Mammary epithelial cell (primary cell): ENCODE measurements at regions of chr15 and their contacts with region 1.

Region 1: DNA sequence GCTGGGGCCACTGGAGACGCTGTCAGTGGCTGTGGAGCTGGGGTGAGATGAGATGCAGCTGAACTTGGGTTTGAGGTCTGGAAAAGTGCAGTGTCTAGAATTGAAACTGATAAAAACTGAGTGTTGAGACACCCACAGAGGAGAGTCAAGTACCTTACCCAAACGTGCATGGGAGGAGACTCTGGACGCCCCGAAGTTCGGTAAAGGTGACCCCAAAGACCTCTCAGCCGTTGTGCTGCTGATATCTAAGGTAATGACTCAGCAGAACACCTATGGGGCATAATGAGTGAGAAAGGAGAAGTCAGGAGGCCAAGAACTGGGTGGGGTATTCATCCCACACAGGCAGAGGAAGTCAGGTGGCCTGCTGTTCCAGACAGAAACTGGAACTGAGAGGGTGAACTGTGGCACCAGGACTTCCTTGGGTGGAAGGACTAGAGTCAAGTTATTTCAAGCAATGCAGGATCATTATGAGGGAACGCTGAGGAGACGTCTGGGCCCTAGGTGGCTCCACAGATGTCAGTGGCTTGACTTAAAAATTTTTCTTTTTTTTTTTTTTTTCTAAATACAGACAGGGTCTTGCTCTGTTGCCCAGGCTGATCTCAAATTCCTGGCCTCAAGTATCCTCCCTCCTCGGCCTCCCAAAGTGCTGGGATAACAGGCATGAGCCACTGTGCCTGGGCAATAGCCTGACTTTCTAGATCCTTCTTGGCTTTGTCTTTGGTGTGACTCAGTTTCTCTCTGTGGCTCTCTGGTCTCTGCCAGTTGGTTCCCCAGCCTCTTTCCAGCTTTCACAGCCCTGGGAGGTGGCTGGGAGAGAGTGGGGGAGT is 67.6 kb upstream of the GCNT3 start:
- DNase-seq: no peak
- H3K4me3 ChIP-seq: no peak overlapping the region
- H3K27ac ChIP-seq: no peak overlapping the region
- H3K4me1 ChIP-seq: peaks cover 3% of the 10 kb centered on the region
- H3K27me3 ChIP-seq: no peaks in the 10 kb centered on the region
- CTCF ChIP-seq: no peak

Region 2: GRCh38 chr15:59553879-59554735 is 10.2 kb after region 1 on chr15:
- CTCF ChIA-PET with region 1: interaction called, 3 read pairs
- dilution Hi-C with region 1: no loop called
- in situ Hi-C with region 1: no loop called
- intact Hi-C with region 1: loop called (anchors 2 kb)
- DNase-seq: peak; percentile 97
- H3K4me3 ChIP-seq: no peak overlapping the region
- H3K27ac ChIP-seq: peak overlapping the region; percentile 89
- H3K4me1 ChIP-seq: peaks cover 30% of the 10 kb centered on the region
- H3K27me3 ChIP-seq: no peaks in the 10 kb centered on the region
- CTCF ChIP-seq: no peak

Region 3: GRCh38 chr15:59583088-59583487 is 39.2 kb after region 1 on chr15:
- CTCF ChIA-PET with region 1: no interaction called
- dilution Hi-C with region 1: loop called (anchors 5 kb)
- in situ Hi-C with region 1: no loop called
- intact Hi-C with region 1: no loop called
- DNase-seq: no peak
- H3K4me3 ChIP-seq: no peak overlapping the region
- H3K27ac ChIP-seq: no peak overlapping the region
- H3K4me1 ChIP-seq: peaks cover 10% of the 10 kb centered on the region
- H3K27me3 ChIP-seq: no peaks in the 10 kb centered on the region
- CTCF ChIP-seq: no peak

Region 4: GRCh38 chr15:59622289-59622688 is 78.4 kb after region 1 on chr15:
- CTCF ChIA-PET with region 1: no interaction called
- dilution Hi-C with region 1: loop called (anchors 5 kb)
- in situ Hi-C with region 1: loop called (anchors 10 kb)
- intact Hi-C with region 1: no loop called
- DNase-seq: peak; percentile 66
- H3K4me3 ChIP-seq: no peak overlapping the region
- H3K27ac ChIP-seq: no peak overlapping the region
- H3K4me1 ChIP-seq: peaks cover 7% of the 10 kb centered on the region
- H3K27me3 ChIP-seq: no peaks in the 10 kb centered on the region
- CTCF ChIP-seq: peak; percentile 29 to 56